GM10248 (cell line): ENCODE measurements at regions of chr17 and their contacts with region 1.

Region 1: DNA sequence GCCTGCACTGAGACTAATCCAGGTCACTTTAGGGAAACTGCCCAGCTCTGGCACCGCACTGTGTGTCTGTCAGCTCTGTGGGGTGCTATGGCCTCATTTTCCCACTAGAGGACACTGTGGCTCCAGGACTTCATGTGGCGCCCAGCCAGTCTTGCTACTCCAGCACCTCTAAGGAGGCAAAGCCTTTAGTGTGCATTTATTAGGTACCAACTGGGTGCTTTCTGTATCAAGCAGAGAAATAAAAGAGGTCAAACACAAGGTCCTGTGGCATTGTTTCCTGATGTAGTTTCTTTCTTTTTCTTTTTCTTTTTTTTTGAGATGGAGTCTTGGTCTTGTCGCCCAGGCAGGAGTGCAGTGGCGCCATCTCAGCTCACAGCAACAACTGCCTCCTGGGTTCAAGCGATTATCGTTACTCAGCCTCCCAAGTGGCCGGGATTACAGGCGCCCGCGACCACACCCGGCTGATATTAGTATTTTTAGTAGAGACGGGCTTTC is 12.5 kb upstream of the RHBDL3 start:
- DNase-seq: peak; percentile 81
- CTCF ChIP-seq: peak; percentile 92

Region 2: GRCh38 chr17:32015245-32016013 is 237.7 kb before region 1 on chr17:
- CTCF ChIA-PET with region 1: no interaction called
- POLR2A ChIA-PET with region 1: no interaction called
- DNase-seq: no peak
- CTCF ChIP-seq: no peak

Region 3: GRCh38 chr17:32240750-32241149 is 12.4 kb before region 1 on chr17:
- CTCF ChIA-PET with region 1: interaction called, 16 read pairs
- POLR2A ChIA-PET with region 1: no interaction called
- DNase-seq: no peak
- CTCF ChIP-seq: no peak

Region 4: DNA sequence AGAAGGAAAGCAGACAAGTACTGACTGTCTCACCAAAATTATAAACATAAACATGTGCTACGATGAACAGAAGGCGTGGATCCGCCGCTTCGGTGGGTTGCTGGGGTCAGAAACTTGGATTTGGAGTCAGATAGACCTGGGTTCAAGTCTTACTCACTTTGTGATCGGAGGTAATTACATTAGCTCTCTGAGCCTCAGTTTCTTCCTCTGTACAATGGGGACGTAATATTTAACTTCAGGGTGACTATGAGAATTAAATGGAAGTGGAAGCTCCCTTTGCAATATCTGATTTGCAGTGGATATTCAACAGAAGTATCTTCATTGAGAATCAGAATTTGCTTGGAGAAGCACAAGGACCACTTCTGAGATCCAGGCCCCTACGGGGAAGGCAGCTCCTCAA is 18.7 kb after region 1 on chr17:
- CTCF ChIA-PET with region 1: interaction called, 10 read pairs
- POLR2A ChIA-PET with region 1: no interaction called
- DNase-seq: no peak
- CTCF ChIP-seq: no peak

Region 5: DNA sequence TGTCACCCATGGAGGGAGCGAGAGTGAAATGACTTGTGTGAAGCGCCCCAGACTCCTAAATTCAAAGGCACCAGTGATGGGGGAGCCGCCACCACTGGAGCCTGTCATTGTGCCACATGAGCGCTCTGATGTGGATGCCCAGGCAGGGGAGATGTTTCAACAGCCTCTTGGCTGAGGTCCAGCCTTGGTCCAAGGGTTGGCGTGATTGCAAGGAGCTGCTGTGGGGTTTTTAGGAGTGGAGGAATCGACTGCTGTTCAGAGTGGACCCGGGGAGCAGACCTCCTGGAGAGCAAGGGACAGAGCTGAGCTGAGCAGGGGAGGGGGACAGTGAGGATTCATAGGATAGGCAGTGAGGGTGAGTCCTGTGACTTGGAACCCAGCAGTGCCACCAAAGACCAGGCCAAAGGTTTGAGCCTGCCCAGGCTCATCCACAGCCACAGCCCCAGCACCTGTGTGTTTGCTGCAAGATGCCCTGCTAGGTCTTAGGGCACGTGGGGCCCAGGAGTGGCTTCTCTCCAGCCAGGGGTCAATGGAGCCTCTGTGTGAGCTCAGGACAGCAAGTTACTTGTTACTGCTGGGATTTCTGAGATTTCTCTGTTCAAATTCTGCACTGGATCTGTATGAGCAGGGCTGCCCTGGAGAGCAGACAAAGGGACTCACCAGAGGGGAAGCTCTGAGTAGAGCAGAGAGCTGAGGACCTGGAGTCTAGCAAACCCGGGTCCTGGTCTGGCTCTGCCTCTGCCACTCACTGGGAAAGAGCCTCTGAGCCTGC is 32.8 kb after region 1 on chr17:
- CTCF ChIA-PET with region 1: interaction called, 10 read pairs
- POLR2A ChIA-PET with region 1: no interaction called
- DNase-seq: no peak
- CTCF ChIP-seq: no peak

Region 6: DNA sequence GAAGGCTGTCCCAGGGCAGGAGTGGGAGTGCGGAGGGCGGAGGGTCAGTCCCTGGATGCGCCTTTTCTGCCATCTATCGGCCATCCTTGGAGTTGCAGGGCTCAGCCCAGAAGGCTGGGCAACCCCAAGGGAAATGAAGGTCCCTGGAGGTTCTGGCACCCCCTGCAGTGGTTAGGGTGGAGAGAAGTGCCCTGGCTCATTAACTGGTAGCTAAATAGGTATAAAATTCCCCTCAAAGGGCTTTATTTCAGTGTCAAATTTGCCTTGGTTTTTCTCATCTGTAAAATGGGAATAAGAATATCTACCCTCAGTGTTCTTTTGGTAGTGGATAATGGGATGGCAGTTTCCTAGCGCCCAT is 66.4 kb after region 1 on chr17:
- CTCF ChIA-PET with region 1: interaction called, 19 read pairs
- POLR2A ChIA-PET with region 1: no interaction called
- DNase-seq: peak; percentile 85
- CTCF ChIP-seq: peak; percentile 97

Region 7: GRCh38 chr17:32396343-32396742 is 143.2 kb after region 1 on chr17:
- CTCF ChIA-PET with region 1: no interaction called
- POLR2A ChIA-PET with region 1: no interaction called
- DNase-seq: no peak
- CTCF ChIP-seq: no peak

Region 8: GRCh38 chr17:32575880-32576279 is 322.7 kb after region 1 on chr17:
- CTCF ChIA-PET with region 1: no interaction called
- POLR2A ChIA-PET with region 1: no interaction called
- DNase-seq: no peak
- CTCF ChIP-seq: no peak

Region 9: GRCh38 chr17:33057564-33057963 is 804.4 kb after region 1 on chr17:
- CTCF ChIA-PET with region 1: no interaction called
- POLR2A ChIA-PET with region 1: no interaction called
- DNase-seq: no peak
- CTCF ChIP-seq: no peak